ENCODE measurements at regions of chr9 and their contacts with region 1.

Region 1: DNA sequence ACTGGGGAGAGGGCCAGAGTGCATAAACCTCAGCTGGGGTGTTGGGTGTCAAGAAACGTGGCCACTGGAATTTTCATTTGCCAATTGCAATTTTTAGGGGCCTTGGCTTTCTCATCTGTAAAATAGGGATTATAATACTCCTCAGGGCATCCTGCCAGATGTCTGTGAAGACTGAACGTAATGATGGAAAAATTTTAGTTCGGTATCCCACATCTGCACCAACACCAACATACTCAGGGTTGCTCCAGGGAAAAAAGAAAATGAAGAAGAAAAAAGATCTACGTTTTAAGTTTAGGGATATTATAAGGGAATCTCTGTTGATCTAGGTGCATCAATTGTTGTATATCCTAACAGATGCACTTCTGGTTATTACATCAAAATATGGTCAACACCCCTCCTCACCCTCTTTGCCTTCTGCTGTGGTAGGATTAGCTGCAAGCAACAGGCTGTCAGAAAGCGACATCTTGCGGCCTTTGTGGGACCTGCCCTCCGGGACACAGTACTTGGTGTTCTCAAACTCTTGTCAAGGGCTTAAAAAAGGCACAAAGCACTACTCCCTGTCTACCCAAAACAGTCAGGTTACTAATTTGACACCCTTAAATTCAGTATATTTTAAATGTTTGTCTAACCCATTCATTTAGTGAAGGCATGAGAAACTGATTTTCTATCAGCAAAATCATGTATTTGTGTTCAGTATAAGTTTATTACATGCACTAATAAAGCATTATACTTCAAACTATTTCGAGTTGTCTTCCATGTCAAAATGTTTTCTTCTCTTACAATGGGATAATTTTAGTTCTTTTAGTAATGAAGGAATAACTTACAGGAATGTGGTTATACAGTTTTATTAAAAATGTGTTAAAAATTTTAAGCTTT is 8.3 kb upstream of the TBC1D2 start:
- DNase-seq: peak; percentile 94
- H3K4me3 ChIP-seq: no peak overlapping the region
- H3K27ac ChIP-seq: no peak overlapping the region
- H3K4me1 ChIP-seq: no peaks in the 10 kb centered on the region
- H3K27me3 ChIP-seq: no peaks in the 10 kb centered on the region
- CTCF ChIP-seq: peak; percentile 66 to 94 (median 89)
- POLR2A ChIP-seq: no peak

Region 2: DNA sequence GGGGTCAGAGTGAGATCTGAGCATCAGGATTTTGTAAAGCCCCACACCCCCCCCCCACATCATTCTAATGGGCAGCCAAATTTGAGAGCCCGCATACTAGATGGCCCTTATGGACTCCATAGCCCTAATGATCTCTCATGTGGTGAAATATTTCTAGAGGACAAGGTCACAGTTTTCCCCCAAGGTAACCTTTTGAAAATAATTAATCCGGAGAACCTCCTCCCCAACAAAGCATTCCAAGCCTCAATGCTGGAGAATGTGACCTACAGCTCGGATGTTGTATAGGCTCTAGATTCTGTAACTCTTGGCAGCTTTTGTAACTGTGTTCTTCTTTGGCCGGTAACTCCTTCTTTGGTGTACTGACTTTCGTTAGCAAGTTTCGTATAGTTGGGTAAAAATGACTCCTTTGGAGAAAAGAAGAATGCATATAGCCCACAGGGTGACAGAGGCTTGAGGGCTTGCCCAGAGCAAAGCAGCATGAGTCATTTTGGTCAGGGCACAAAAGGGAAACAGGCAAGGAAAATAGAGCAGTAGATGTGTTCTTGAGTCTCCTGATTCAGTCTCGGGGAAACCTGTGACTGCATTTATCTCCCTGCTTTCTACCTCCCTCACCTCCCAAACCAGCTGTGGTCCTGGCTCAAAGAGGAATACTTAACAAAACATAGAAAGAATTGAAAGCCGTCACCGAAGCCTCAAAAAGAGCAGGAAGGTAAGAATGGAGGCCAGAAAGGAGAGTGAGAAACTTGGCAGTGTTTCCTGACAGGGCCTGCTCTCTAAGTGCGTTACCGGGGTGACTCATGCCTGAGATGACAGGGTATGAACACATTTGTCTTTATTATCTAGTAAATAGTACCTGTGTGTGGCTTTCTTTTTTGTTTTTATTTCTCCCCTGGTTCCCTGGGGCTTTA is 560.0 kb before region 1 on chr9:
- intact Hi-C with region 1: loop called (anchors 10 kb)
- DNase-seq: no peak
- H3K4me3 ChIP-seq: no peak overlapping the region
- H3K27ac ChIP-seq: no peak overlapping the region
- H3K4me1 ChIP-seq: peaks cover 0 to 10% (median 7%) of the 10 kb centered on the region in 6 donors
- H3K27me3 ChIP-seq: peaks cover 0 to 15% (median 0%) of the 10 kb centered on the region in 7 donors
- CTCF ChIP-seq: no peak
- POLR2A ChIP-seq: no peak

Region 3: GRCh38 chr9:97921959-97922724 is 341.6 kb before region 1 on chr9 and contains the start of gene TRMO:
- intact Hi-C with region 1: loop called (anchors 5 kb)
- DNase-seq: peak; percentile 99
- H3K4me3 ChIP-seq: peak within 1 kb of the TSS; percentile 42 to 78 (median 56)
- H3K27ac ChIP-seq: peak within 1 kb of the TSS; percentile 96 to 100 (median 99)
- H3K4me1 ChIP-seq: peaks cover 32 to 72% (median 57%) of the 10 kb centered on the region in 6 donors
- H3K27me3 ChIP-seq: no peaks in the 10 kb centered on the region
- CTCF ChIP-seq: peak; percentile 42 to 82 (median 62)
- POLR2A ChIP-seq: peak; percentile 85 to 96 (median 89)
- total RNA-seq, gene TRMO: 16.8 to 58.6 (median 28.3) TPM

Region 4: GRCh38 chr9:98074115-98074990 is 189.4 kb before region 1 on chr9:
- intact Hi-C with region 1: loop called (anchors 5 kb)
- DNase-seq: peak; percentile 89
- H3K4me3 ChIP-seq: no peak overlapping the region
- H3K27ac ChIP-seq: peak overlapping the region; percentile 19 to 77 (median 54)
- H3K4me1 ChIP-seq: peaks cover 12 to 48% (median 28%) of the 10 kb centered on the region in 6 donors
- H3K27me3 ChIP-seq: no peaks in the 10 kb centered on the region
- CTCF ChIP-seq: peak; percentile 81 to 97 (median 94)
- POLR2A ChIP-seq: no peak

Region 5: GRCh38 chr9:98365227-98365669 is 101.5 kb after region 1 on chr9:
- intact Hi-C with region 1: no loop called
- DNase-seq: no peak
- H3K4me3 ChIP-seq: no peak overlapping the region
- H3K27ac ChIP-seq: no peak overlapping the region
- H3K4me1 ChIP-seq: no peaks in the 10 kb centered on the region
- H3K27me3 ChIP-seq: peaks cover 0 to 20% (median 0%) of the 10 kb centered on the region in 7 donors
- CTCF ChIP-seq: peak in 7 of 11 experiments; percentile 4 to 42 (median 29)
- POLR2A ChIP-seq: no peak

Region 6: DNA sequence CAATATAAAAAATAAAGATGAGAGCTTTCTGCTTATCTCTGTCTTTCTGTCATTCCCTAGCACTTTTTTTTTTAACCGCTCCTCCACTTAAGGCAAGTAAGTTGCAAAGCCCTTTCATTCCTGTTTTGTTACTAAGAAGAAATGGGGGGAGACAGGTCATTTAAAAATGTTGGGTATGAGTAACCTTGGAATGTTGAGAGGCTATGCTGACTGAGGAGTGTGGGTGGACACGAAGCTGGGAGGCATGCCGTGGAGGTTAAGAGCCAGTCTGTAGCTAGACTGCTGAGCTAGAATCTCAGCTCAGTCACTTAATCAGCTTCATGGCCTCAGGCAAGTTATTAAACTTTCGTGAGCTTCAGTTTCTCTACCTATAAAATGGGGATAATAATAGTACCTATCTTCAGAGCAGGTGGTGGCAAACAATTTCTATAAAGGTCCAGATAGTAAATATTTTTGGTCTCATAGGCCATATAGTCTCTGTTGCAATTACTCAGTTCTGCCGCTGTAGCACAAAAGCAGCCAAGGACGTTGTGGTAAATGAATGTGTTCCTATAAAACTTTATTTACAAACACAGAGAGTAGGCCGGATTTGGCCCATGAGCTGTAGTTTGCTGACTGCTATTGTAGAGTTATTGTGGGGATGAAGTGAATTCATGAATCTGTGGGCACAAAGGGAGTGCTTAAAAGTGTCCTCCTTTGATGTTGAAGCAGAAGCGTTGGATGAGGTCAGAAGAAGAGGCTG is 225.0 kb after region 1 on chr9:
- intact Hi-C with region 1: no loop called
- DNase-seq: no peak
- H3K4me3 ChIP-seq: no peak overlapping the region
- H3K27ac ChIP-seq: no peak overlapping the region
- H3K4me1 ChIP-seq: no peaks in the 10 kb centered on the region
- H3K27me3 ChIP-seq: peaks cover 0 to 16% (median 0%) of the 10 kb centered on the region in 7 donors
- CTCF ChIP-seq: no peak
- POLR2A ChIP-seq: no peak

Region 7: DNA sequence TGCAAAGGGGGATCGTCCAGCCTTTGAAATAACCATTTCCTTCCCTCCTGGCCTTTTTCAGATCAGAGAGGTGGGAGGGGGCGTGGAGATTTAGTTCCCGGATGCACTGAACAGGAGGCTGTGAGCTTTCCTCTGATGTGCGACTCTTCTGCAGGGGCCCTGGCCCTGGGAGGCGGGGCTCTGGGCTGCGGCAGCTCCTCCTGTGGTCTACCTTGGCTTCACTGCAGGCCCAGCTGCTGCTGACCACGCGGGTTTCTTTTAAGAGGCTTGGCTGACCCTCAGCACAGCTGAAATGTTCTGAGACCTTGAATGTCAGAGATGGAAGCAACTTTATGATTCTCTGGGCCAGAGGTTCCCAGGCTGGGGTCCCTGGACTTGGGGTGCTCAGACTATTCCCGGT is 652.9 kb after region 1 on chr9:
- intact Hi-C with region 1: no loop called
- DNase-seq: no peak
- H3K4me3 ChIP-seq: no peak overlapping the region
- H3K27ac ChIP-seq: no peak overlapping the region
- H3K4me1 ChIP-seq: peaks cover 0 to 21% (median 13%) of the 10 kb centered on the region in 6 donors
- H3K27me3 ChIP-seq: no peaks in the 10 kb centered on the region
- CTCF ChIP-seq: no peak
- POLR2A ChIP-seq: no peak